AG04450 (cell line): ENCODE measurements at regions of chr20 and their contacts with region 1.

Region 1: DNA sequence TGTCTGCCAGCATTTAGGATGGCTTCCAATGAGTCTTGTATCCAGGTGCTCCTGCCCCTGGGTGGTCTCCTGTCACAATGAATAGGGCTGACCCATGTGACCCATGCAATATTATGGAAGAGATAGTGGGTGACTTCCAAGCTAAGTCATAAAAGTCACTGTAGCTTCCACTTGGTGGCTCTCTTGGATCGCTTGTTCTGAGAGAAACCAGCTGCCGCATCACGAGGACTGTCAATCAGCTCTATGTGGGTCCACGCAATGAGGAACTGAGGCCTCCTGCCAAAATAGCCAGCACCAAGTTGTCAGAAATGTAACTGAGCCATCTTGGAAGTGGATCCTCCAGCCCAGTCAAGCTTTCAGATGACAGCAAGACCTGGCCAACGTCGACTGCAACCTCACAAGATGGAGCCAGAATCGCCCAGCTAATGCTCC is 14.9 kb upstream of the MATN4 start:
- DNase-seq: no peak
- H3K4me3 ChIP-seq: no peak overlapping the region
- H3K27ac ChIP-seq: peak overlapping the region; percentile 31
- H3K27me3 ChIP-seq: no peaks in the 10 kb centered on the region
- CTCF ChIP-seq: no peak

Region 2: DNA sequence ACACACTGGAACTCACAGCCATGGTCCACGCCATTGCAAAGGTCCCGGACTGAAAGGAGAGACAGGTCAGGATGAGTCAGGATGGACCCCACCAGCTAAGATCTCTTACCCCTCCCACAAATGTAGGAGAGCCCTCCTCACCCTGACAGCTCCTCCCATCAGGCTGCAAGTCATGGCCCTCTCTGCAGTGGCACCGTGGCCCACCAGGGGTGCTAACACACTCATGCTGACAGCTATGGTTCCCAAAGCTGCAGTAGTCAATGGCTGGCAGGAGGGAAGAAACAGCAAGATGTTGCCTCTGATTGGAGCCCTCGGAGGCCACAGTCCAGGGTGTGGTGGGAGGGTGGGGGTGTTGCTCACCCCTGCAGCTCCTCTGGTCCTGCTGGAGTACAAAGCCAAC is 22.0 kb before region 1 on chr20:
- CTCF ChIA-PET with region 1: interaction called, 14 read pairs
- POLR2A ChIA-PET with region 1: interaction called, 3 read pairs
- DNase-seq: no peak
- H3K4me3 ChIP-seq: no peak overlapping the region
- H3K27ac ChIP-seq: no peak overlapping the region
- H3K27me3 ChIP-seq: peaks cover 11% of the 10 kb centered on the region
- CTCF ChIP-seq: peak; percentile 48

Region 3: DNA sequence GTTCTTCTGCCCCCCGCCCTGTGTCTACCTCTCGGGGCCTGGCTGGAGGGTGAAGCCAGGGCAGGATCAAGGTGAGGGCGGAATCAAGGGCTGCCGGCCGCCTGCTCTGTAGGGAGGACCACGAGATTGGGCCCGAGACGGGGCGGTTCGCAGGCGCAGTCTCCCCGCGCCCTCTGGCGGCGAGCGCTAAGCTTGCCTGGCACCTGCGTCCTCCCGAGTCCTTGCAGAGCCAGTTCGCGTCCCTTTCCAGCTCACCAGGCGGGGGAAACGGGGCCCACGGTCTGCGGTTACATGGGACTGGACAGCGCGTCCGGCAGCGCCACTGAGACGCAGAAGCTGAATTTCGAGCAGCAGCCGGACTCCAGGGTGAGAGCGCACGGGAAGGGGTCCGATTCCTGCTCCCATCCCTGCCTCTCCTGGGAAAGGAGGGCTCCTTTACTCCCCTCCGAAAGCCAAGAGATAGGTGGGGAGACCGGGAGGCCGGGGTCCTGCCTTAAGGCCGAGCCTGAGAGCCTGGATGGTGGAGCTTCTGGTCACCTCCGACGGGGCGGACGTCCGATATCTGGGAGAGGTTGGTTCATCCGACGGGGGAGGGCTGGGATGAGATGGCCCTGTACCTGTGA is 11.3 kb before region 1 on chr20:
- CTCF ChIA-PET with region 1: interaction called, 10 read pairs
- POLR2A ChIA-PET with region 1: no interaction called
- DNase-seq: no peak
- H3K4me3 ChIP-seq: no peak overlapping the region
- H3K27ac ChIP-seq: no peak overlapping the region
- H3K27me3 ChIP-seq: peaks cover 42% of the 10 kb centered on the region
- CTCF ChIP-seq: peak; percentile 77

Region 4: DNA sequence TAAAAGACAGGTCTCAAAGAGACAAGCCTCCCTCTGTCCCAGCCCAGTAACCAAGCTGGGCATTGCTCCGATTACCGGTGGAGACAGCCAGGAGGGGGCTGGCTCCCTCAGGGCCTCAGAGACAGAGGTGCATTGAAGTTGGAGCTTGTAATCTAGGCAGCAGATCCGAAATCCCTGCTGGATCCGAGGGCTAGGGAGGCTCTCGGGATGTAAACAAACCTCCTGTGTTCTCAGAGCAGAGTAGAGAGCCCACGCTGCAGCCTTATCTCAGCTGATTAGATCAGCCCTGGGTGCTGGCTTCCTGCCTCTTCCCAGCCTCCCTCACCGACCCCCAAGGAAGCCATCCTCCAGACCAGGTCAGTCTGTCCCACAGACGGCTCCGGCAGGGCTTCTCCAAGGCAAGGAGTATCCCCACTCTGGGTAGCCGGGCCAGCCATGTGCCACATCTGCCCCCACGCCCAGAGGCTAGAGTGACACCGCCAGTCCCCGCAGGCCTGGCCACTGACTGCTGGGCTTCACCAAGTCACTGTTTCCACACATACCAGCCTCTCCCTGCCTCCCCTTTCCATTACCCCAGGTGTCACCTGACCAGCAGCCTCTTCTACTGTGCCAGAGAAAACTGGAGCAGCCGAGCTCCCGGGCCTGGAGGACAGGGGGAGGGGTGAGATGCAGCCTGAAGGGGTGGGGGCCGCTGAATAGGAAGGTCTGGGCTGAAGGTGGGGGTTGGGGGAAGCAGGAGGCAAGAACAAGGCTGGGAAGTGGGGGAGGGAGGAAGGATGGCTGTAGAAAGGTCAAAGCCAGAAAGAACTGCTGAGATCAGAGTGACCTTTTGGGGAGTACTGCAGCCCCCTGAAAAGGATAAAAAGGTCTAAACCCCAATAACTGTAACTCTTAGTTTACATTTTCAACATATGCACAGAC is 19.2 kb after region 1 on chr20:
- CTCF ChIA-PET with region 1: interaction called, 18 read pairs
- POLR2A ChIA-PET with region 1: interaction called, 7 read pairs
- DNase-seq: no peak
- H3K4me3 ChIP-seq: peak overlapping the region; percentile 97
- H3K27ac ChIP-seq: peak overlapping the region; percentile 85
- H3K27me3 ChIP-seq: no peaks in the 10 kb centered on the region
- CTCF ChIP-seq: no peak

Region 5: GRCh38 chr20:45362804-45363610 is 40.0 kb after region 1 on chr20 and contains the start of gene SYS1:
- CTCF ChIA-PET with region 1: interaction called, 16 read pairs
- POLR2A ChIA-PET with region 1: interaction called, 4 read pairs
- DNase-seq: peak; percentile 97
- H3K4me3 ChIP-seq: peak within 1 kb of the TSS; percentile 96
- H3K27ac ChIP-seq: peak within 1 kb of the TSS; percentile 97
- H3K27me3 ChIP-seq: no peaks in the 10 kb centered on the region
- CTCF ChIP-seq: peak; percentile 94
- polyA plus RNA-seq, gene SYS1: 25.1 and 33.4 TPM in 2 replicates

Region 6: DNA sequence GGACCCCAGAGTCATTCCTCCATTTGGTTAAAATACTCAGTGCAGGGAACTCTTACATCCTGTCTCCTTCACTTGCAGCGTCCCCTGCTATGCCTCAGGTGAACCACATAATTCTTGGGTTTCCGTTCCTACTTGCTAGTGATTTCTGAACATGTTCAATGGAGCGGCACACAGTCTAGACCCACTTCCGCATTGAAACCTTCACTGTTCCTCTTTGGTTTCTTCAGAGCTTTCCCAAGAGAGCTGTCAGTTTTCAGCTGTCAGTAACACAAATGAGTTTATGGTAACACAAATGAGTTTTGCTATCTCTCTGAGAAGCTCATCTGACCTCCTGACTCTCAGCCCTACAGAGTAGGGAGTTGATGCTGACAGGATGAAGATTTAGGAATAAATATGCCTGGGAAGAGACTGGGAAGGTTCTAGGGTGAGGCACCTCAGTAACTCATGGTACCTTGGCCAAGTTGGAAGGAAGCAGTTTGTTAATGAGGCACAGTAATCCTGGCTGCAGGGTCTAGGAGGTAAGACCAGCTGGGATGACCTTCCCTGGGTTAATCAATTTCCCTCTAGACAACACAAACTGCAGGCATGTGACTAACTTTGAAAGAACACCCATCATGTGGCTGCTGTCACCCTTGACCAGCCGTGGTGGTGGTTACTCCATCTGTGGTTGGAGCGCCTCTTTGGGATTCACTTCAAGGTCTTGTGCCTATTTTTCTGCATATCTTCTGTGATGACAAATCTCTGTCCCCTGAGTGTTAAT is 45.4 kb after region 1 on chr20:
- CTCF ChIA-PET with region 1: interaction called, 23 read pairs
- POLR2A ChIA-PET with region 1: no interaction called
- DNase-seq: no peak
- H3K4me3 ChIP-seq: no peak overlapping the region
- H3K27ac ChIP-seq: no peak overlapping the region
- H3K27me3 ChIP-seq: no peaks in the 10 kb centered on the region
- CTCF ChIP-seq: no peak

Region 7: GRCh38 chr20:45450097-45450818 is 127.3 kb after region 1 on chr20:
- CTCF ChIA-PET with region 1: interaction called, 37 read pairs
- POLR2A ChIA-PET with region 1: no interaction called
- DNase-seq: no peak
- H3K4me3 ChIP-seq: no peak overlapping the region
- H3K27ac ChIP-seq: no peak overlapping the region
- H3K27me3 ChIP-seq: peaks cover 18% of the 10 kb centered on the region
- CTCF ChIP-seq: peak; percentile 62

Region 8: GRCh38 chr20:45752746-45753145 is 429.8 kb after region 1 on chr20:
- CTCF ChIA-PET with region 1: no interaction called
- POLR2A ChIA-PET with region 1: no interaction called
- DNase-seq: no peak
- H3K4me3 ChIP-seq: no peak overlapping the region
- H3K27ac ChIP-seq: no peak overlapping the region
- H3K27me3 ChIP-seq: no peaks in the 10 kb centered on the region
- CTCF ChIP-seq: no peak